A549 (cell line): ENCODE measurements at regions of chr9 and their contacts with region 1.

Region 1: DNA sequence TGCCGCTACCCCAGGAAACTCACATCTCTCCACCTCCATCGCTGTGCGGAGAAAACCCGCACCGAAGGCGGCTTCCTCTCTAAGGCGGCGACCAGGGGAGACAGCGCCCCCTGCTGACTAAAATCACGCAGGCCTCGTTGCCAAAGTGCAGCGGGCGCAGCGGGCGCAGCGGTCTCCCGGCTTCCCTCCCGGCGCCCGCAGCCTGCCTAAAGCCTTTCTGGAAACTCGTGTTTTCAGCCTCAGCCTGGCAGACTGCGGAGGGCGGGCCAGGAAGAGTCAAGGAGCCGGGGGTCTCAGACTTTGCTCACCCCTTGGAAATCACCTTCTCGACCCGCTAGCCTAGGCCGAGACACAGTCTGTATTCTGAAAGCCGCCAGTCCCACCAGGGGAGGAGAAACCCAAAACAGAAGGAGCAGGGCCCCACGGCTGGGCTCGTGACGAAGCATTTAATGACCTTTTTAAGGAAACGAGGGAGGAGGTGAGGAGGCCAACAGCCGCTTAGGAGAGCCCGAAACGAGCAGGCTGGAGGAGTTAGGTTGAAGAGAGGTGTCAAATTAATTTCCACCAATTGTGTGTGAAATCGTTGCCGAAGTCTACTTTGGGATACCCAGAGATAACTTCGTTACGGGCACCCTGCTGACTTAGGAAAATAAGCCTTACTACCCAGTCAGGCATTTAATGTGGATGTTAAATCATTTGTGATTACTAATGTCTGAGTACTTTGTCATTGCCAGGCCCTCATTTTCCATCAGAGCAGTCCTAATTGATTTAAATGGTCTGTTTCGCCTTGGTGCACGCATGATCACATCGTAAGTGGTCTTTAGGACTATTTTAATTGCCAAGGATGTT is 7.3 kb upstream of the FOXB2 start:
- DNase-seq: peak in 1 of 2 experiments; percentile 61
- ATAC-seq: peak; percentile 70 to 89
- H3K4me3 ChIP-seq: peak overlapping the region; percentile 25; the same call in 2 of the 3 replicates
- H3K27ac ChIP-seq: no peak overlapping the region
- H3K4me1 ChIP-seq: peaks cover 22% of the 10 kb centered on the region; the same call in 2 of the 3 replicates
- CTCF ChIP-seq: peak; percentile 77
- EP300 ChIP-seq: no peak
- POLR2A ChIP-seq: no peak
- RAD21 ChIP-seq: peak; percentile 57 to 59; a peak in 4 of 5 replicates

Region 2: GRCh38 chr9:76798527-76798926 is 213.7 kb before region 1 on chr9:
- CTCF ChIA-PET with region 1: no interaction called
- POLR2A ChIA-PET with region 1: no interaction called
- DNase-seq: no peak
- ATAC-seq: no peak
- H3K4me3 ChIP-seq: no peak overlapping the region
- H3K27ac ChIP-seq: no peak overlapping the region
- H3K4me1 ChIP-seq: no peaks in the 10 kb centered on the region
- CTCF ChIP-seq: no peak
- EP300 ChIP-seq: no peak
- POLR2A ChIP-seq: no peak
- RAD21 ChIP-seq: no peak

Region 3: DNA sequence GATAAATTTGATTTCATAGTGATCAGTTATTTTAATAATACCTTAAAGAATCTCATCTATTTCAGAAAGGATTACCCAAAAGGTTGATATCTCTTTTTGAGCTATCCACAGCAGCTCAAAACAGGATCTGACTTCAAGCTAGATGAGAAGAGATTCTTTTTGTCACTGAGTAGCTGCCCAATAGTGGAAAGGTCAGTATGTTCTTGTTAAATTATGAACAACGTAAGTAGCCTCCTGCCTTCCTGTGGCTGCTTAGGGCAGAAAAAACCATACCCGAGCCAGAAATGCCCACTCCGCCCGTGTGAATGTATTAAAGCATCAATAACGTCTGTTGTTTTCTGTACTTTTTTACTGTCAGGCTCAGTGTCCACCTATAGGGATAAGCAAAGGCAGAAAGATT is 54.9 kb before region 1 on chr9:
- CTCF ChIA-PET with region 1: no interaction called
- POLR2A ChIA-PET with region 1: no interaction called
- DNase-seq: no peak
- ATAC-seq: no peak
- H3K4me3 ChIP-seq: no peak overlapping the region
- H3K27ac ChIP-seq: no peak overlapping the region
- H3K4me1 ChIP-seq: no peaks in the 10 kb centered on the region
- CTCF ChIP-seq: no peak
- EP300 ChIP-seq: no peak
- POLR2A ChIP-seq: no peak
- RAD21 ChIP-seq: no peak

Region 4: GRCh38 chr9:76996700-76997099 is 15.5 kb before region 1 on chr9:
- CTCF ChIA-PET with region 1: interaction called, 22 read pairs
- POLR2A ChIA-PET with region 1: no interaction called
- DNase-seq: peak in 1 of 2 experiments; percentile 37
- ATAC-seq: peak; percentile 93 to 95
- H3K4me3 ChIP-seq: no peak overlapping the region
- H3K27ac ChIP-seq: no peak overlapping the region
- H3K4me1 ChIP-seq: no peaks in the 10 kb centered on the region
- CTCF ChIP-seq: peak; percentile 46
- EP300 ChIP-seq: no peak
- POLR2A ChIP-seq: no peak
- RAD21 ChIP-seq: peak; percentile 51 to 63

Region 5: GRCh38 chr9:77024776-77025545 is 12.8 kb after region 1 on chr9:
- CTCF ChIA-PET with region 1: interaction called, 19 read pairs
- POLR2A ChIA-PET with region 1: interaction called, 7 read pairs
- DNase-seq: no peak
- ATAC-seq: no peak
- H3K4me3 ChIP-seq: no peak overlapping the region
- H3K27ac ChIP-seq: no peak overlapping the region
- H3K4me1 ChIP-seq: peaks cover 9% of the 10 kb centered on the region; the same call in 1 of the 3 replicates
- CTCF ChIP-seq: no peak
- EP300 ChIP-seq: no peak
- POLR2A ChIP-seq: no peak
- RAD21 ChIP-seq: no peak

Region 6: GRCh38 chr9:77038281-77039036 is 26.3 kb after region 1 on chr9:
- CTCF ChIA-PET with region 1: no interaction called
- POLR2A ChIA-PET with region 1: no interaction called
- DNase-seq: no peak
- ATAC-seq: no peak
- H3K4me3 ChIP-seq: no peak overlapping the region
- H3K27ac ChIP-seq: no peak overlapping the region
- H3K4me1 ChIP-seq: no peaks in the 10 kb centered on the region
- CTCF ChIP-seq: no peak
- EP300 ChIP-seq: no peak
- POLR2A ChIP-seq: no peak
- RAD21 ChIP-seq: no peak